Adrenal gland (tissue), 19 donors: ENCODE measurements at regions of chr1 and their contacts with region 1.

Region 1: GRCh38 chr1:178273707-178274410 is 180.0 kb downstream of the RASAL2 start:
- DNase-seq: no peak
- H3K4me3 ChIP-seq: no peak overlapping the region
- H3K27ac ChIP-seq: no peak overlapping the region
- H3K4me1 ChIP-seq: no peaks in the 10 kb centered on the region
- H3K27me3 ChIP-seq: no peaks in the 10 kb centered on the region
- CTCF ChIP-seq: no peak
- POLR2A ChIP-seq: no peak

Region 2: GRCh38 chr1:178220094-178220493 is 53.8 kb before region 1 on chr1:
- intact Hi-C with region 1: loop called in 1 of 2 experiments (anchors 10 kb)
- DNase-seq: no peak
- H3K4me3 ChIP-seq: no peak overlapping the region
- H3K27ac ChIP-seq: no peak overlapping the region
- H3K4me1 ChIP-seq: no peaks in the 10 kb centered on the region
- H3K27me3 ChIP-seq: no peaks in the 10 kb centered on the region
- CTCF ChIP-seq: no peak
- POLR2A ChIP-seq: no peak

Region 3: DNA sequence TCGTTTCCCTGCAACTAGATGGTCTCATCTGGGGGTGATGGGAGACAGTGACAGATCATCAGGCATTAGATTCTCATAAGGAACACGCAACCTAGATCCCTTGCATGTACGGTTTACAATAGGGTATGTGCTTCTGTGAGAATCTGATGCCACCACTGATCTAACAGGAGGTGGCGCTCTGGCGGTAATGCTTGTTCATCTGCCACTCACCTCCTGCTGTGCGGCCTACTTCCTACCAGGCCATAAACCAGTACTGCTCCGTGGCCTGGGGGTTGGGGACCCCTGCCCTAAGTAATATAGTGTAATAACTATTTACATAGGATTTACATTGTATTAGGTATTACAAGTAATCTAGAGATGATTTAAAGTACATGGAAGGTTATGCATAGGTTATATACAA is 88.0 kb after region 1 on chr1:
- intact Hi-C with region 1: no loop called
- DNase-seq: no peak
- H3K4me3 ChIP-seq: no peak overlapping the region
- H3K27ac ChIP-seq: no peak overlapping the region
- H3K4me1 ChIP-seq: peaks cover 0 to 8% of the 10 kb centered on the region in 2 donors
- H3K27me3 ChIP-seq: no peaks in the 10 kb centered on the region
- CTCF ChIP-seq: no peak
- POLR2A ChIP-seq: no peak